Left ventricle myocardium inferior (tissue), 1 donor: ENCODE measurements at regions of chr1 and their contacts with region 1.

Region 1: DNA sequence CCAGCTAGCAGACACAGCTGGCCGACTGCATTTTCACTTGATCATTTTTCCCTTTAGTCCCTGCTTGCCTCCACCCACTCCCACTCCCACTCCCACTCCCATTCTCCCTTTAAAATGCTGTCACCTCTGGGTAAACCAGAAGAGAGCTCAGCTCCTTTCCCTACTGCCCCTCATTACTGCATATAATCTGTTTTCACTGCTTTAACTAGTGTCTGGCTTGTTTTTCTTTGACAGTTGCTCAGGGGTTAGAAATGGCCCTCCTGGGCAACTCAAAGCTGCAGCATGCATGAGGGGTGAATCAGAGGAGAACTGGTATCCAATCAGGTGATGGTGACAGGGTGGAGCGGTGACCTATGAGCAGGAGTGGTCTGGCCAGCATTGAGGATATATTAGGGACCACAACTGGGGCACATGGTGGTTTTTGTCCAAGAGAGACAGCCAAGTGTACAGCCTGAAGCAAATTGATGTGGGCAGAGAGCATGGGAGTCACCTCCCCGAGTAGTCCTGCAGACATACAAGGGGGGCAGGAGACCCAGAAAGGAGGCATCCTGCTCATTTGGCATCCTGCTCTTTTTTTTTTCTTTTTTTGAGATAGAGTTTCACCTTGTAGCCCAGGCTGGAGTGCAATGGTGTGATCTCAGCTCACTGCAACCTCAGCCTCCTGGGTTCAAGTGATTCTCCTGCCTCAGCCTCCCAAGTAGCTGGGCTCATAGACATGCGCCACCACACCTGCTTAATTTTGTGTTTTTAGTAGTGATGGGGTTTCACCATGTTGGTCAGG is 42.6 kb upstream of the SRSF10 start:
- DNase-seq: no peak
- H3K4me3 ChIP-seq: no peak overlapping the region
- H3K27ac ChIP-seq: peak overlapping the region; percentile 94
- H3K4me1 ChIP-seq: peaks cover 53% of the 10 kb centered on the region
- H3K27me3 ChIP-seq: no peaks in the 10 kb centered on the region
- CTCF ChIP-seq: no peak

Region 2: DNA sequence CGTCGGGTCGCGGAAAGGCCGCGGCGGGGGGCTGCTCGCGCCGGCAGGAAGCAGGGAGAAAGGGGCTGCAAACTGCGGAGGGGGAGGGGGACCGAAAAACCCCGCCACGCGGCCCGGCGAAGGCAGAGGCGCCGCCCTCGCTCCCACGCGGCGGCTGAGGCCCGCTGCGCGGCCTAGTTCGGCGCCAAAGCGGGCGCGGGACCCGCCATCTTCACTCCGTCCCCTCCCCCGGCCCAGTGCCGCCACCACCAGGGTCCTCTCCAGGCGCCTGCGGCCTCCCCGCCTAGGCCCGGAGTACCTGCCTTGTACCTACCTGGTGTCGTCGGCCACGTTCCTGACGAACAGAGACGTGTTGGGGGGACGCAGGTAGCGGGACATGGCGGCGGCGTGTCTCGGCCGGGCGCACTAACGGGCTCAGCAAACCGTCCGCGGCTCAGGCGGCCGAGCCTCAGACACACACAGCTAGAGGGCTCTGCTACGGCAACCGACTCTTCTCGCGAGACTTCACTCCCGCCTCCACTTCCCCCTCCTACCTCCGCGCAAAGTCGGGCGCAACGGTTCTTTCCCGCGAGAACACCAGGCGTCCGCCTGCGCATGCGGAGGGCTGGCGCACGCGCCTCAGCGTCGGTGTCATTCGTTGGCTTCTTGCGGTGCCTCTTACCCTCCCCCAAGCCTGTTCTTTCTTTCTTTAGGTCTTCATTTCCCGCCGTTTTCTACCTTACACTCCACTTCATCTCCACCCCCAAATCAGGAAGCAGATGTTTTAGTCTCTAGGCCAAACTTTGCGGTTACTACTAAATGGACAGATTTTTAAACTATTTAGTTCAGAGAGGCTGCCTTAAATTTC is 42.7 kb before region 1 on chr1 and contains the start of gene SRSF10:
- intact Hi-C with region 1: loop called (anchors 5 kb)
- DNase-seq: peak; percentile 98
- H3K4me3 ChIP-seq: peak within 1 kb of the TSS; percentile 83
- H3K27ac ChIP-seq: peak within 1 kb of the TSS; percentile 96
- H3K4me1 ChIP-seq: peaks cover 61% of the 10 kb centered on the region
- H3K27me3 ChIP-seq: no peaks in the 10 kb centered on the region
- CTCF ChIP-seq: peak; percentile 61
- total RNA-seq, gene SRSF10: 56.5 TPM

Region 3: GRCh38 chr1:24107462-24108138 is 84.8 kb after region 1 on chr1:
- intact Hi-C with region 1: no loop called
- DNase-seq: no peak
- H3K4me3 ChIP-seq: peak overlapping the region; percentile 72
- H3K27ac ChIP-seq: peak overlapping the region; percentile 96
- H3K4me1 ChIP-seq: peaks cover 85% of the 10 kb centered on the region
- H3K27me3 ChIP-seq: no peaks in the 10 kb centered on the region
- CTCF ChIP-seq: no peak

Region 4: GRCh38 chr1:24206516-24207394 is 184.0 kb after region 1 on chr1:
- intact Hi-C with region 1: no loop called
- DNase-seq: no peak
- H3K4me3 ChIP-seq: no peak overlapping the region
- H3K27ac ChIP-seq: no peak overlapping the region
- H3K4me1 ChIP-seq: peaks cover 4% of the 10 kb centered on the region
- H3K27me3 ChIP-seq: peaks cover 10% of the 10 kb centered on the region
- CTCF ChIP-seq: no peak